H1 (cell line): ENCODE measurements at regions of chr2 and their contacts with region 1.

Region 1: DNA sequence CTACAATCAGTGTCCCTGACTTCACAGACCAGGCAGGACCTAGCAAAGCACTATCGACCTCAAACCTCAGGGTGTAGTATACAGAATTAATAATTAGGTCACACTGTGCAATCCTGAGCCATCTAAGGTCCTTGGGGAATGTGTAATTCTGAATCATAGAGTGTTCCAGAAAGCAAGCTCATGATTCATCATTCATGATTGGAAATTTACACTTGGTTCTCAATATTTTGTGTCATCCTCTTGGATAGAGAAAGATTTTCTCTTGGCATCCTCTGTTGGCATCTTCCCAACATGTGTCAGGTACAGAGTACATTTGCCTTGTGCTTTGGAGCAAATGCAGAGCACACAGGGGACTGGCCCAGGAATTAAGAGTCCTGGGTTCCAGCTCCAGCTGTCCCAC is 245.0 kb upstream of the NT5C1B start:
- DNase-seq: no peak
- H3K4me3 ChIP-seq: no peak overlapping the region
- H3K27ac ChIP-seq: no peak overlapping the region
- H3K4me1 ChIP-seq: peaks cover 0 to 10% (median 5%) of the 10 kb centered on the region in 4 experiments; a peak in 4 of 7 replicates
- H3K27me3 ChIP-seq: no peaks in the 10 kb centered on the region
- CTCF ChIP-seq: no peak
- EP300 ChIP-seq: no peak
- POLR2A ChIP-seq: no peak
- RAD21 ChIP-seq: no peak

Region 2: DNA sequence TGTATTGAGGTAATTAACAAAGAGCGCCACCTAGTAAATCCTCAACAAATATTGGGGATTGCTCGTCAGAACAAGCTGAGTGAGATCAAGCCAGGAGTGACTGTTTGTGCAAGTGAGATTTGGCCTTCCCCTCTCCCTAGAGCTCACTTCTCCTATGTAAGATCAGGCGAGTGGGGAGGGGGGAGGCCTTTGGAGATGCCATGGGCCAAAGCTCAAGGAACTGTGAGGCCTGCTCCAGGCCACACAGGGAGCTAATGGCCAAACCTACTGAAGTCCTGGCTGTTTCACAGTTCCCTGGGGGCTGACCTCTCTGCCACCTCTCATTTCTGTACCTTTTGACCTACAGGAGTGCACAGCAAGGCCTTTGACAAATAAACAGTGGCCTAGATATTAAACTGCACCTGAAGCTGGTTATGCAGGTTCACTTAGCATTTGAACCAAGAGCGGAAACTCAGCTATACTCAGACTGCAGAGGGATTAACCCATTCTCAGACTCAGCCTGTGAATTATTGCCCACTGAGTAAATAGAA is 10.0 kb before region 1 on chr2:
- CTCF ChIA-PET with region 1: interaction called, 16 read pairs
- POLR2A ChIA-PET with region 1: no interaction called
- DNase-seq: no peak
- H3K4me3 ChIP-seq: no peak overlapping the region
- H3K27ac ChIP-seq: no peak overlapping the region
- H3K4me1 ChIP-seq: 0 out of 7 replicates have a peak, but pooled peaks cover 0 to 3% (median 0%) of the 10 kb centered on the region in 4 experiments
- H3K27me3 ChIP-seq: no peaks in the 10 kb centered on the region
- CTCF ChIP-seq: no peak
- EP300 ChIP-seq: no peak
- POLR2A ChIP-seq: no peak
- RAD21 ChIP-seq: 0 out of 4 replicates have a peak, but pooled peaks of 1 of the 2 experiments have one; percentile 6